Prostate gland (tissue), 2 donors: ENCODE measurements at regions of chr6 and their contacts with region 1.

Region 1: DNA sequence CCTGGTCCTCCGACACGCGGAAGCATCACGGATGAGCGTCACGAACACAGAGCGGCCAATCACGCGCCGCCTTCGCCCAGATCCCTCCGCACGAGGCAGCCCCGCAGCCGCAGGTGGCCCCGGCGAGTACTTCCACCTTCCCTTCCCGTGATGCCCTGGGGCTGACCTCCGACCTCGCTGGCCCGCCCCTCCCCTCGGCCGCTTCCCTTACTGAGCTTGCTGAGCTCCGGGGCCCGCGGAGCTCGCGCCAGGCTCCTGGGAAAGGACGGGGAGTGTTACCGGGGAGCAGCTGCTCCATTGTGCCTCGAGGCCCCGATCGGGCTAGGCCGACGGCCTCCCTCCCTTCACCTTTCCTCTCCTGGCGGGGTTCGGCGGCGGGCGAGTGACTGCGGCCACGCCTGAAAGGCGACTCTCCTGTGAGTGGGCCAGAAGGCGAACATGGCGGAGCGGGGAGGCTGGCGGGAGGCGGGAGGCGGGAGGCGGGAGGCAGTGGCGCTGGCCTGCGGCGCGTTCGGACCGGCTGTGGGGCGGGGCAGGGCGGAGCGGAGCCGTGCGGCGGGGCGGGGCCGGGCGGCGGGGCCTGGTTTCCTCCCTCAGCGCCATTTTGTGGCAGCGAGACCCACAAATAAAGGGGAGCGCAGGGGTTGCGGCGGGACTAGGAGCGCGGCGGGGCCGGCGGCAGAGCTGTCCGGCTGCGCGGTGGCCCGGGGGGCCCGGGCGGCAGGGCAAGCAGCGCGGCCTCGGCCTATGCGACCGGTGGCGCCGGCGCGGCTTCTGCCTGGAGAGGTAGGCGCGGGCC is at the start of gene WTAP:
- DNase-seq: peak; percentile 95
- H3K4me3 ChIP-seq: peak within 1 kb of the TSS; percentile 91 to 97
- H3K27ac ChIP-seq: peak within 1 kb of the TSS; percentile 99 to 100
- H3K4me1 ChIP-seq: peaks cover 5% of the 10 kb centered on the region
- H3K27me3 ChIP-seq: no peaks in the 10 kb centered on the region
- CTCF ChIP-seq: no peak
- POLR2A ChIP-seq: peak; percentile 83
- total RNA-seq, gene WTAP: 84.1 to 99.3 TPM

Region 2: GRCh38 chr6:159693128-159693893 is 33.8 kb before region 1 on chr6 and contains the start of gene SOD2:
- intact Hi-C with region 1: loop called (anchors 1 kb)
- DNase-seq: peak; percentile 76
- H3K4me3 ChIP-seq: peak within 1 kb of the TSS; percentile 77 to 83
- H3K27ac ChIP-seq: peak within 1 kb of the TSS; percentile 96
- H3K4me1 ChIP-seq: peaks cover 14% of the 10 kb centered on the region
- H3K27me3 ChIP-seq: no peaks in the 10 kb centered on the region
- CTCF ChIP-seq: no peak
- POLR2A ChIP-seq: peak; percentile 90
- total RNA-seq, gene SOD2: 196 to 285 TPM

Region 3: GRCh38 chr6:159761873-159762680 is 35.0 kb after region 1 on chr6 and contains the start of gene ACAT2:
- intact Hi-C with region 1: loop called (anchors 2 kb)
- DNase-seq: peak; percentile 97
- H3K4me3 ChIP-seq: peak within 1 kb of the TSS; percentile 66 to 88
- H3K27ac ChIP-seq: peak within 1 kb of the TSS; percentile 98 to 99
- H3K4me1 ChIP-seq: no peaks in the 10 kb centered on the region
- H3K27me3 ChIP-seq: no peaks in the 10 kb centered on the region
- CTCF ChIP-seq: peak in 2 of 4 experiments; percentile 29 to 35
- POLR2A ChIP-seq: peak; percentile 73
- total RNA-seq, gene ACAT2: 10.2 to 22.6 TPM

Region 4: GRCh38 chr6:159789377-159790148 is 62.4 kb after region 1 on chr6 and contains the start of gene TCP1:
- intact Hi-C with region 1: loop called (anchors 2 kb)
- DNase-seq: peak; percentile 100
- H3K4me3 ChIP-seq: peak within 1 kb of the TSS; percentile 92 to 97
- H3K27ac ChIP-seq: peak within 1 kb of the TSS; percentile 99
- H3K4me1 ChIP-seq: peaks cover 6% of the 10 kb centered on the region
- H3K27me3 ChIP-seq: no peaks in the 10 kb centered on the region
- CTCF ChIP-seq: peak in 1 of 4 experiments; percentile 6
- POLR2A ChIP-seq: peak; percentile 98
- total RNA-seq, gene TCP1: 145 to 187 TPM

Region 5: DNA sequence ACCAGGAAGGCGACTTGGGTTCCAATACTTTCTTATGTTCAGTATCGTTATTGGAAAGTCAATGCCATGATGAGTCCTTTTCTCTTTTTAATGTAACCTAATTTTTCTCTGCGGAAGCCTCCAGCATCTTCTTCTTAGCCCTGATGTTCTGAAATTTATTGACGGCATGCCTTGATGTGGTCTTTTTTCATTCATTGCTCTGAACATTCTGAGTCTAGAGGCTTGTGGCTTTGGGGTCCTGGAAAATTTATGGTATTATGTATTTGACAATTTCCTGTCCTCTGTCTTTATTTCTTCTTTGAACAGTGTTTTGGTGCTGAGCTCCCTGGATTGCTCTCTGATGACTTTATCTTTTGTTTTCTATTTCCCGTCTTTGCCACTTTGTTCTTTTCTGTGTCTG is 135.0 kb after region 1 on chr6:
- intact Hi-C with region 1: no loop called
- DNase-seq: no peak
- H3K4me3 ChIP-seq: no peak overlapping the region
- H3K27ac ChIP-seq: no peak overlapping the region
- H3K4me1 ChIP-seq: no peaks in the 10 kb centered on the region
- H3K27me3 ChIP-seq: no peaks in the 10 kb centered on the region
- CTCF ChIP-seq: no peak
- POLR2A ChIP-seq: no peak

Region 6: DNA sequence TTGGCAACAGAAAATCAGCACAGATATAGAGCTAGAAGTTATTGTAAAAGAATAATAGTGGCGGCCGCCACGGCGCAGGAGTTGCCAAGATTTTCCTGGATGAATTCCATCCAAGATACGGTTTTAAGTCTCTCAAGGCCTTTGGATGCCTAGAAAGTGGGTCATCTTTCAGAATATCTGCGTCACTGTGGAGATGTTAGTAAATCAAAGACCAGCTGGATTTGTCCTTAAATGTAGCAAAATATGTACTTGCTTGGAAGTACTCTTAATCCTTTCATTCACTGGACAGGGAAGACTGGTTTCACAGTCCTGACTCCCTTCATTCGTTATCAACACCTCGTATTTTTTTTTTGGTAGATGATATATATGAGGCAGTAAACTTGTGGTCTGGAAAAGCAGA is 704.1 kb after region 1 on chr6:
- intact Hi-C with region 1: loop called (anchors 10 kb)
- DNase-seq: no peak
- H3K4me3 ChIP-seq: no peak overlapping the region
- H3K27ac ChIP-seq: peak overlapping the region; percentile 49
- H3K4me1 ChIP-seq: peaks cover 7% of the 10 kb centered on the region
- H3K27me3 ChIP-seq: no peaks in the 10 kb centered on the region
- CTCF ChIP-seq: no peak
- POLR2A ChIP-seq: no peak